Lower leg skin (tissue), 4 donors: ENCODE measurements at regions of chr5 and their contacts with region 1.

Region 1: GRCh38 chr5:67209142-67209771 is 12.7 kb upstream of the CD180 start:
- DNase-seq: peak in 1 of 2 donors; percentile 78
- H3K4me3 ChIP-seq: no peak overlapping the region
- CTCF ChIP-seq: peak in 1 of 3 donors; percentile 66
- POLR2A ChIP-seq: no peak

Region 2: GRCh38 chr5:66987949-66988838 is 221.1 kb before region 1 on chr5:
- intact Hi-C with region 1: loop called (anchors 10 kb)
- DNase-seq: no peak
- H3K4me3 ChIP-seq: no peak overlapping the region
- CTCF ChIP-seq: peak in 1 of 3 donors; percentile 64
- POLR2A ChIP-seq: no peak